ENCODE measurements at regions of chr2 and their contacts with region 1.

Region 1: DNA sequence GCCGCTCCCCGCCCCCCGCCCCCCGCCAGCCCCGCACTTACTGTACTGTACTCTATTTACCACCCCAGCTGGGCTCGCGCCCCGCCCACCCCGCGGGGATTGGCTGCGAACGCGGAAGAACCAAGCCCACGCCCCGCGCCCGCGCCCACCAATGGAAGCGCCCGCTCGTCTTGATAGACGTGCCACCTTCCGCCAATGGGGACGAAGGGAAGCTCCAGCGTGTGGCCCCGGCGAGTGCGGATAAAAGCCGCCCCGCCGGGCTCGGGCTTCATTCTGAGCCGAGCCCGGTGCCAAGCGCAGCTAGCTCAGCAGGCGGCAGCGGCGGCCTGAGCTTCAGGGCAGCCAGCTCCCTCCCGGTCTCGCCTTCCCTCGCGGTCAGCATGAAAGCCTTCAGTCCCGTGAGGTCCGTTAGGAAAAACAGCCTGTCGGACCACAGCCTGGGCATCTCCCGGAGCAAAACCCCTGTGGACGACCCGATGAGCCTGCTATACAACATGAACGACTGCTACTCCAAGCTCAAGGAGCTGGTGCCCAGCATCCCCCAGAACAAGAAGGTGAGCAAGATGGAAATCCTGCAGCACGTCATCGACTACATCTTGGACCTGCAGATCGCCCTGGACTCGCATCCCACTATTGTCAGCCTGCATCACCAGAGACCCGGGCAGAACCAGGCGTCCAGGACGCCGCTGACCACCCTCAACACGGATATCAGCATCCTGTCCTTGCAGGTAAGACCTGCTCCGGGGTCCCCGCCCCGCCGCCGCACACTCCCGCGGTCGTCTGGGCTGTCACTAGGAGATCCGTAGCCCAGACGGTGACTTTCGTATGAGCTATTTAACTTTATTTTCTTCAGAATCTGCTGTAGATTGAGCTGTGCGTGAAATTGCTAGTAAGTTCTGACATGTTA is at the start of gene ID2:
- DNase-seq: peak; percentile 99
- H3K4me3 ChIP-seq: peak within 1 kb of the TSS; percentile 93 to 96 (median 95)
- H3K4me3 Mint-ChIP-seq: peak within 1 kb of the TSS; percentile 98 to 99
- H3K27ac ChIP-seq: peak within 1 kb of the TSS; percentile 85 to 89
- H3K27ac Mint-ChIP-seq: peak within 1 kb of the TSS; percentile 93 to 98 (median 97)
- H3K4me1 ChIP-seq: peaks cover 38 to 49% of the 10 kb centered on the region in 2 donors
- H3K4me1 Mint-ChIP-seq: peaks cover 38% of the 10 kb centered on the region
- H3K27me3 ChIP-seq: peaks cover 11 to 26% of the 10 kb centered on the region in 2 donors
- H3K27me3 Mint-ChIP-seq: peaks cover 21 to 34% (median 22%) of the 10 kb centered on the region in 3 donors
- CTCF ChIP-seq: no peak
- polyA plus RNA-seq, gene ID2: 282 to 2,821 (median 295) TPM

Region 2: DNA sequence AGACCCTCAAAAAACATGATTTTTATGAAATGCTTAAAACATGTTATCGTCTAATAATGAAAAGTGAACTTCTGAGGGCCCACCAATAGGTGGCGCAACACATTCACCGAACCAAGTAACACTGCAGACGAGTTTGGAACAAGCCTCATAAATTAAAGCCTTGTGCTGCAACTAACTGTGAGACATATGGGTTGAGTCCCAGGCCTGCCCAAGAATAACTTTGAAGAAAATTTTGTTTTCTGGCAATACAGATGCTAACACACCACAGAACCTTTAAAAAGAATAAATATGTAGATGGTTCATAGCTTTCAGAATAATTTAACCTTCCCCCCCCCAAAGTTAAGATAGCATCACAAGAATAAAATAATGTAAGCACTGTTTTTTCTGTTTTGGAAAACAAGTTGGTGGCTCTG is 1479.0 kb before region 1 on chr2:
- intact Hi-C with region 1: loop called in 1 of 2 experiments (anchors 10 kb)
- DNase-seq: peak; percentile 43 to 69 (median 58)
- H3K4me3 ChIP-seq: no peak overlapping the region
- H3K4me3 Mint-ChIP-seq: no peak overlapping the region
- H3K27ac ChIP-seq: no peak overlapping the region
- H3K27ac Mint-ChIP-seq: no peak overlapping the region
- H3K4me1 ChIP-seq: peaks cover 15 to 16% of the 10 kb centered on the region in 2 donors
- H3K4me1 Mint-ChIP-seq: peaks cover 17% of the 10 kb centered on the region
- H3K27me3 ChIP-seq: no peaks in the 10 kb centered on the region
- H3K27me3 Mint-ChIP-seq: no peaks in the 10 kb centered on the region
- CTCF ChIP-seq: peak; percentile 96

Region 3: DNA sequence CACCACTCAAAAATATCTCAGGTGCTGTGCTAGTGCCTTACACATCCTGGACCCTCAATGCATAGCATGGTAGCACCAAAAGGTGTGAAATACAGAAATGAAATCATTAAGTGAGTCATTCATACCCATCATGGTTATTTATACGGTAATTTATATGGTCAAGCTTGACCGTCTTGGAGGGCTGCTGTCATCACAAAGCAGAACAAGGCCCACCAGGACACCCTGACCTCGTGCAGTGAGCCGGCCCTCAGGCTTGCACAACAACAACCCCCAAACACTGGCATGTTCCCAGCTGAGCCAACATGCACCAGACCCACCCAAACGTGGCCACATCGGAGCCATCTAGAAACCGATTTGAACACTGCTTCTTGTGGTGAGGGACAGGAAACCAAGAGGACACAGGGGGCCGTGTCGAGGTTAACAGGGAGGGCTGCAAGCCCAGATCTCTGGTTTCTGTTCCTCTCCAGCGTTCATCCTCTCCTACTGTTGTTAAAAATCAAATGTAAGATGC is 378.7 kb before region 1 on chr2:
- intact Hi-C with region 1: loop called (anchors 5 to 10 kb)
- DNase-seq: peak; percentile 77 to 89 (median 79)
- H3K4me3 ChIP-seq: peak overlapping the region in 1 of 3 experiments; percentile 6
- H3K4me3 Mint-ChIP-seq: peak overlapping the region; percentile 47 to 73
- H3K27ac ChIP-seq: peak overlapping the region; percentile 84 to 85
- H3K27ac Mint-ChIP-seq: peak overlapping the region; percentile 93 to 96 (median 96)
- H3K4me1 ChIP-seq: peaks cover 93 to 100% of the 10 kb centered on the region in 2 donors
- H3K4me1 Mint-ChIP-seq: peaks cover 95% of the 10 kb centered on the region
- H3K27me3 ChIP-seq: no peaks in the 10 kb centered on the region
- H3K27me3 Mint-ChIP-seq: peaks cover under 1 to 3% (median 1%) of the 10 kb centered on the region in 3 donors
- CTCF ChIP-seq: peak; percentile 49

Region 4: GRCh38 chr2:8534729-8535468 is 147.1 kb before region 1 on chr2:
- intact Hi-C with region 1: loop called (anchors 5 kb)
- DNase-seq: peak; percentile 92 to 94 (median 93)
- H3K4me3 ChIP-seq: peak overlapping the region in 1 of 3 experiments; percentile 55
- H3K4me3 Mint-ChIP-seq: peak overlapping the region; percentile 63 to 73
- H3K27ac ChIP-seq: peak overlapping the region; percentile 79 to 94
- H3K27ac Mint-ChIP-seq: peak overlapping the region; percentile 94 to 98 (median 98)
- H3K4me1 ChIP-seq: peaks cover 71 to 74% of the 10 kb centered on the region in 2 donors
- H3K4me1 Mint-ChIP-seq: peaks cover 71% of the 10 kb centered on the region
- H3K27me3 ChIP-seq: no peaks in the 10 kb centered on the region
- H3K27me3 Mint-ChIP-seq: peaks cover 0 to 1% (median 0%) of the 10 kb centered on the region in 3 donors
- CTCF ChIP-seq: no peak

Region 5: DNA sequence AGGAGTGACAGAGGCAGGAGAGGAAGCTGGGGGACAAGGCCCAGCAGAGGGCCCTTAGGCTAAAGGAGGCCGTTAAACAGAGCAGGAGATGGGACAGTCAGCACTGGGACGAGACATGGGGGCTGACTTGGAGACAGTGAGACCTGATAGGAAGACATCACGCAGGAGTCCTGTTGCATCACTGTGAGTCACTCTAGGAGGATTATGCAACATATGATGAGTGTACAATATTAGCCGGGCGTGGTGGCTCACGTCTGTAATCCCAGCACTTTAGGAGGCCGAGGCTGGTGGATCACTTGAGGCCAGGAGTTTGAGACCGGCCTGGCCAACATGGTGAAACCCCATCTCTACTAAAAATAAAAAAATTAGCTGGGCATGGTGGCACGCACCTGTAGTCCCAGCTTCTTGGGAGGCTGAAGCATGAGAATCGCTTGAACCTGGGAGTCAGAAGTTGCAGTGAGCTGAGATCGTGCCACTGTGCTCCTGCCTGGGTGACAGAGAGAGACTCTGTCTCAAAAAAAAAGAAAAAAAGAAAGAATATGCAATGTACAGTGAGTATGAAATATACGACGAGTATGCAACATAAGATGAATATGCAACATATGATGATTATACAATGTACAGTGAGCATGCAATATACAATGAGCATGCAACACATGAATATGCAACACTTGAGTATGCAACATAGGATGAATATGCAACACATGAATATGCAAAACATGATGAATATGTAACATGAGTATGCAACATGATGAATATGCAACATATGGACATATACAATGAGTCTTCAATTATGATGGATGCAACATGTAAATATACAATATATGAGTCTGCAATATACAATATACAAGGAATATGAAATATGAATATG is 83.5 kb before region 1 on chr2:
- intact Hi-C with region 1: loop called (anchors 5 kb)
- DNase-seq: peak; percentile 98 to 100 (median 99)
- H3K4me3 ChIP-seq: no peak overlapping the region
- H3K4me3 Mint-ChIP-seq: peak overlapping the region in 1 of 2 donors; percentile 59
- H3K27ac ChIP-seq: peak overlapping the region; percentile 76 to 85
- H3K27ac Mint-ChIP-seq: peak overlapping the region; percentile 93 to 98 (median 97)
- H3K4me1 ChIP-seq: peaks cover 47 to 51% of the 10 kb centered on the region in 2 donors
- H3K4me1 Mint-ChIP-seq: peaks cover 56% of the 10 kb centered on the region
- H3K27me3 ChIP-seq: no peaks in the 10 kb centered on the region
- H3K27me3 Mint-ChIP-seq: peaks cover 1 to 5% (median 2%) of the 10 kb centered on the region in 3 donors
- CTCF ChIP-seq: no peak

Region 6: DNA sequence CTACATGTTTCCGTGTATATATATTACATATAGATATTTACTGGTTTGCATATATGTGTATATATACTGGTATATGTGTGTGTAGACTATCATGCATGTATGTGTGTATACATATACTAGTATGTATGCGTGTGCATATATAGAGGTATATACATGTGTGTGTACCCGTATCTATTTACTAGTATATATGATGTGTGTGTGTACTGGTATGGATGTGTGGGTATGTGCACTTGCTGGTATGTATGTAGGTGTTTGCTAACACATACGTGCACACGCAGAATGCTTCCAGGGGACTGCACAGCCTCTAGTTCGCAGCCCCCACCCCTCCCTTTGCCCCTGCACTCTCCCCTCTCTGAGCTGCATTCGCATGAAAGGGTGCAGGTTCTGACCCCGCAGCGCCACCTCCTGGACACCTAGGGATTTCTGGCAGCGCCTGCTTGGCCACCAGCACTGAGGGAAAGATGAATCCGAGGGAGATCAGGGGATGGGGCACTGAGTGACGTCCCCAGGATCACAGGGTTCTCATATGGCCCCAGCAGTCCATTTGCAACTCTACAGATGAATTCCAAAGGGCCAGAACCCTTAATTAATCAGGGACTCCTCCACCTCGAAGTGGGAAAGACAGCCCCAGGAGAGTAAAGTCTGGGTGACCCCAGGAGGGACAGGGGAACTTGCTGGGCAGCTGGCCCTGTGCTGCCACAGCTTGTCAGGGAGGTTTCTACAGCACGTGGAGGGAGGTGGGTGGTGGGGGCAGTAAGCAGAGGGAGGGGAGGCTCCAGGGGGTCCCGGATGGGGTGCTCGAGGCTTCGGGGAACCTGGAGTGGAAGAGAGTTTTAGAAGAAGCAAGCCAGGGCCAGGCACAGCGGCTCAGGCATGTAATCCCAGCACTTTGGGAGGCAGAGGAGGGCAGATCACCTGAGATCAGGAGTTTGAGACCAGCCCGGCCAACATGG is 457.7 kb after region 1 on chr2:
- intact Hi-C with region 1: no loop called
- DNase-seq: peak; percentile 54 to 62 (median 62)
- H3K4me3 ChIP-seq: no peak overlapping the region
- H3K4me3 Mint-ChIP-seq: no peak overlapping the region
- H3K27ac ChIP-seq: no peak overlapping the region
- H3K27ac Mint-ChIP-seq: no peak overlapping the region
- H3K4me1 ChIP-seq: peaks cover 18 to 26% of the 10 kb centered on the region in 2 donors
- H3K4me1 Mint-ChIP-seq: peaks cover 25% of the 10 kb centered on the region
- H3K27me3 ChIP-seq: no peaks in the 10 kb centered on the region
- H3K27me3 Mint-ChIP-seq: peaks cover 7 to 10% (median 7%) of the 10 kb centered on the region in 3 donors
- CTCF ChIP-seq: peak; percentile 82